ENCODE measurements at regions of chr6 and their contacts with region 1.

Region 1: DNA sequence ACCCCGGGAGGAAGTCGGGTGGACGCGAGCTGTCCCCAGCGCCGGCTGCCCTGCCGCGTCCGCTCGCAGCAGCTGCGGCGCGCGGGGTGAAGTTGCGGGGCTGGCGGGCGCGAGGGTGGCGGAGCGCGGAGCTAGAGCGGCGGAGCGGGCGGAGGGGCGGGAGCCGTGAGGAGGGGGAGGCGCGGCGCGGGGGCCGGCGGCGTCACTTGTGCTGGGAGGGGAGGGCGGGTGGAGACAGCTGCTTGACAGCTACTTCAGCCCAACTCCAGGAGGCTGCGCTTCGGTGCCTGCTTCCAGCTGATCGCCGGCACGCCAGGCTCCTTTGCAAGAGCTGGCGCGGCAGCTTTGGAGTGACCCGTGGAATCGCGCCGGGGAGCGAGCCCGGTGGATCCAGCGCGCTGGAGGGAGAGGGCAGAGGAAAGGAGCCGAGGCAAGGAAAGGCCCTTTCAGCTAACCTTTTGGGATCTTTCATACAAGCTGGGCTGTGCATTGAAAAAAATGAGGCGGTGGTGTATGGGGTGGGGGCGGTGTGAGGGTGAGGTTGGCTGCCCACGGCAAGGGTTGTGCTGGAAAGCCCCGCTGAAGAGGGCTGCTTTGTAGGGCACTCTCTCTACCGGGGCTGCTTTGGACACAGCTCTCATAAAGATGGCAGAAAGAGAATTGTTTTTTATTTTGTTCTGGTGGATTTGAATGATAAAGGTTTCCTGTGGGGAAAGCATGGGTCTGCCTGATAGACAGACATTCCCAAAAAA is 24.6 kb downstream of the RIPOR2 start:
- DNase-seq: no peak
- ATAC-seq: peak; percentile 49
- H3K4me3 Mint-ChIP-seq: peak overlapping the region; percentile 91
- H3K27ac Mint-ChIP-seq: peak overlapping the region; percentile 95
- H3K4me1 Mint-ChIP-seq: peaks cover 98% of the 10 kb centered on the region
- H3K27me3 Mint-ChIP-seq: no peaks in the 10 kb centered on the region
- CTCF ChIP-seq: no peak

Region 2: GRCh38 chr6:24855395-24856245 is 55.5 kb before region 1 on chr6:
- CTCF ChIA-PET with region 1: interaction called, 16 read pairs
- POLR2A ChIA-PET with region 1: interaction called, 15 read pairs
- intact Hi-C with region 1: loop called (anchors 1 kb)
- DNase-seq: no peak
- ATAC-seq: peak; percentile 66
- H3K4me3 Mint-ChIP-seq: no peak overlapping the region
- H3K27ac Mint-ChIP-seq: peak overlapping the region; percentile 81
- H3K4me1 Mint-ChIP-seq: peaks cover 63% of the 10 kb centered on the region
- H3K27me3 Mint-ChIP-seq: no peaks in the 10 kb centered on the region
- CTCF ChIP-seq: peak; percentile 58

Region 3: GRCh38 chr6:24891004-24891403 is 20.1 kb before region 1 on chr6:
- CTCF ChIA-PET with region 1: no interaction called
- POLR2A ChIA-PET with region 1: interaction called, 11 read pairs
- intact Hi-C with region 1: loop called (anchors 2 kb)
- DNase-seq: no peak
- ATAC-seq: peak; percentile 49
- H3K4me3 Mint-ChIP-seq: peak overlapping the region; percentile 13
- H3K27ac Mint-ChIP-seq: peak overlapping the region; percentile 80
- H3K4me1 Mint-ChIP-seq: peaks cover 90% of the 10 kb centered on the region
- H3K27me3 Mint-ChIP-seq: no peaks in the 10 kb centered on the region
- CTCF ChIP-seq: no peak

Region 4: DNA sequence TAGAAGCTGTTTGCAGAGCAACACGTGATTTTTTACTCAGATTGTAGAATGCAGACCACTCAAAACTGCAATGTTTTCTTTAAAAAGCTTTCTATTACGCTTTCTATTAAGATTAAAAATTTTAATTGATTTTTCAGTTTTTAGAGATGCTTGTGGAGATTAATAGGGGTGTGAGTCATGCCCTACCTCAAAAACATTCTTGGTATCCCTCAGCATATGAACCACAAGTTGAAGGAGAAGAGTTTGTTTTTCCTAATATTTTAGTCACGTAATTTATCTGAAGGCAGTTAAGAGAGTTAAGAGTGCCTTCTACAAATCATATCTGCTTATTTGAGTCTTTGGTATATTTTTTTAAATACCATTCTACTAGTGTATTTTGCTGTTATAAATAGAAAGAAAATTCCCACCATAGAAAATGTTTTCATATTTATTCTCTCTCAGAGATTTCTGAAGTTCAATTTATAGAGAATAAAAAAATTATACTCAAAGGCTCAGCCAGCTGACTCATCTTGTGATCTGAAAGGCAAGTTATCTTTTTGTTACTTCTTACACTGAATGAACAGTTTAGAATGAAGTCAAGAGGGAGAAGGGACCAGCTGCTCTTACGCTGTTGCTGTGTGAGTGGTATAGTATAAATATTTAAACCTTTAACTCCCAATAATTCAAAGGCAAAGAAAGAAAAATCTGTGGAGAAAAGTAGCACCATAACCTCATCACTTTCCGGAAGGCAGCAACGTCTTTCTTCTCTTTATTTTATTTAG is 17.0 kb after region 1 on chr6:
- CTCF ChIA-PET with region 1: interaction called, 56 read pairs
- POLR2A ChIA-PET with region 1: interaction called, 111 read pairs
- intact Hi-C with region 1: loop called (anchors 2 kb)
- DNase-seq: no peak
- ATAC-seq: no peak
- H3K4me3 Mint-ChIP-seq: peak overlapping the region; percentile 35
- H3K27ac Mint-ChIP-seq: peak overlapping the region; percentile 91
- H3K4me1 Mint-ChIP-seq: peaks cover 96% of the 10 kb centered on the region
- H3K27me3 Mint-ChIP-seq: no peaks in the 10 kb centered on the region
- CTCF ChIP-seq: no peak

Region 5: DNA sequence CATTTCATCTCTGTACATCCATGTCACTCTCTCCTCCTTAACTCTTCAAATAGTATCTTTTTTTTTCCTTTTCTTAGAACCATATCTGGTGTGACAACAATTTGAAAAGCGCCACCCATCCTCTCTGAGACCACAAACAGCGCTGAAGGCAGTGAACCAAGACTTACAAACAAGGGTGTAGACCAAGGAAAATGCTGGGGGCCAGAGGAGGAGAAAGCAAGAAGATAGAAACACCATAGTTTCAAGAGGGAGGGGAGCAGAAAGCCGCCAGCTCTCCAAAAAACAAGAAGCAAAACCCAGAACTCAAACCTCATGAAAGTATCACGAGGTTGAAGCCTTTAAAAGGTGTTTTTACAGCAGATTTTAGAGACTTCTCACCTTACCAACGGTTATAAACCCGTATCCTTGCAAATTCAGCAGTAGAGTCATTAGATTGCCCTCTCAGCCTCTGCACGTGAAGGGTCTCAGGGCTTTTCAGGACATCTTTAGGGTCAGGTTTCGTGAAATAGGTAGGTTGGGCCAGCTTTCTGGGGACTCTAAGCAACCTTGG is 38.0 kb after region 1 on chr6:
- CTCF ChIA-PET with region 1: interaction called, 5 read pairs
- POLR2A ChIA-PET with region 1: interaction called, 11 read pairs
- intact Hi-C with region 1: no loop called
- DNase-seq: no peak
- ATAC-seq: peak; percentile 80
- H3K4me3 Mint-ChIP-seq: peak overlapping the region; percentile 65
- H3K27ac Mint-ChIP-seq: peak overlapping the region; percentile 94
- H3K4me1 Mint-ChIP-seq: peaks cover 85% of the 10 kb centered on the region
- H3K27me3 Mint-ChIP-seq: no peaks in the 10 kb centered on the region
- CTCF ChIP-seq: no peak

Region 6: DNA sequence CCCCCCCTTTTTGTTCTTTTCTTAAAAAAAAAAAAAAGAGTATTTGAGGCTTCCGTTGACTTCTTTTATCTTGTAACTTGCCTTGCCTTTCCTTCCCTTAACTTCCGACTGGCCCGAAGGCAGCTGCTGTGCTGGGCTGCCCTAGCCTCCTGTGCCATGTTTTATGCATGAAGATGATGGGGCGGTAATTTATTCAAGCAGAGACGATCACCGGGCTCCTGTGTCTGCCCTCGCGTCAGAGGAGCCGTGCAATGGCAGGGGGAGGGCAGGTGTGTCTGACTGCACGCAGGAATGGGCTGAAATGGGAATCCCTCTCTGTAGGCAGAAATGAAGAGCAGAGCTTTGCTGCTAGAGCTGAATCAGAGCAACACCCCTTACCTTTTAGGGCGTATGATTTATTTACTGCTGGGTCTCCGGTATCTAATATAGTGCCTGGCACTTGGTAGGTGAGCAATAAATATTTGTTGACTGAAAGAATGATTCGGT is 130.9 kb after region 1 on chr6:
- CTCF ChIA-PET with region 1: no interaction called
- POLR2A ChIA-PET with region 1: interaction called, 16 read pairs
- intact Hi-C with region 1: no loop called
- DNase-seq: peak; percentile 53
- ATAC-seq: peak; percentile 65
- H3K4me3 Mint-ChIP-seq: peak overlapping the region; percentile 99
- H3K27ac Mint-ChIP-seq: peak overlapping the region; percentile 96
- H3K4me1 Mint-ChIP-seq: peaks cover 87% of the 10 kb centered on the region
- H3K27me3 Mint-ChIP-seq: no peaks in the 10 kb centered on the region
- CTCF ChIP-seq: no peak

Region 7: GRCh38 chr6:25053875-25054371 is 142.8 kb after region 1 on chr6:
- CTCF ChIA-PET with region 1: no interaction called
- POLR2A ChIA-PET with region 1: interaction called, 10 read pairs
- intact Hi-C with region 1: no loop called
- DNase-seq: no peak
- ATAC-seq: peak; percentile 76
- H3K4me3 Mint-ChIP-seq: peak overlapping the region; percentile 75
- H3K27ac Mint-ChIP-seq: peak overlapping the region; percentile 96
- H3K4me1 Mint-ChIP-seq: peaks cover 96% of the 10 kb centered on the region
- H3K27me3 Mint-ChIP-seq: no peaks in the 10 kb centered on the region
- CTCF ChIP-seq: no peak